MCF 10A (cell line): ENCODE measurements at regions of chr15 and their contacts with region 1.

Region 1: GRCh38 chr15:75201609-75202250 is at the start of gene C15orf39:
- DNase-seq: peak; percentile 67
- H3K4me3 Mint-ChIP-seq: peak within 1 kb of the TSS; percentile 91
- H3K27ac Mint-ChIP-seq: peak within 1 kb of the TSS; percentile 94
- H3K4me1 Mint-ChIP-seq: peaks cover 17% of the 10 kb centered on the region
- H3K27me3 Mint-ChIP-seq: no peaks in the 10 kb centered on the region
- CTCF ChIP-seq: peak; percentile 91
- total RNA-seq, gene C15orf39: 13.3 and 17.2 TPM in 2 replicates

Region 2: DNA sequence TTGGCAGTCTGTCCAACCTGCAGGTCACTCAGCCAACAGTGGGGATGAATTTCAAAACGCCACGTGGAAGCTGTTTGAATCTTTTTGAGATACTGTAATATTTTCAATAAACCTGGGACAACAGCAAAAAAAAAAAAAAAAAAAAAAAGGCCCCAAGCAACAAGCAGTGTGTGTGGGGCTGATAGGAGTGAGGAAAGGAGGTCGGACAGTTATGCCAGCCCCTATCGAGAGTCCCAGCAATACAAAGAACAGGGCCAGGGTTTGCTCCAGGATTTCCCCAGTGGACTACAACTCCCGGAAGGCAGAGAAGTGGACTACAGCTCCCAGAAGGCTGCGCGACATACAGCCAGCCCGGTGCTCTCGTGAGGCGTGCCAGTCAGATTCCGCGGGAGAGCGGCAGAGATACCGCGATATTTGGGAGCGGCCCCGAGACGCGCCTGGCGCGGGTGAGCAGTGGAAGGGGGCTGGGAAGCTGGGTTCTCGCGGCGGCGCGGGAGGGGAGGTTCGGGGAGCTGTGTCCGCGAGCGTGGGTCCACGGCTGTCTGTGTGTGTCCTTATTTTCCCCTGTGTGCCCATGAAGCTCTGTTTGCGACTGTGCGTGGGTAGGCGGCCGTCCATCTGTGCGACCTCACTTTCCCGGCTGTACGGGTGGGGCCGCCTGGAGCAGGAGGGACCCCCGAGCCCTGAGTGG is 178.4 kb before region 1 on chr15 and contains the start of gene PPCDC:
- CTCF ChIA-PET with region 1: interaction called, 85 read pairs
- POLR2A ChIA-PET with region 1: interaction called, 61 read pairs
- intact Hi-C with region 1: no loop called
- DNase-seq: peak; percentile 95
- H3K4me3 Mint-ChIP-seq: peak within 1 kb of the TSS; percentile 94
- H3K27ac Mint-ChIP-seq: peak within 1 kb of the TSS; percentile 95
- H3K4me1 Mint-ChIP-seq: no peaks in the 10 kb centered on the region
- H3K27me3 Mint-ChIP-seq: no peaks in the 10 kb centered on the region
- CTCF ChIP-seq: no peak
- total RNA-seq, gene PPCDC: 20.3 and 25.1 TPM in 2 replicates

Region 3: GRCh38 chr15:75034615-75035014 is 167.1 kb before region 1 on chr15:
- CTCF ChIA-PET with region 1: interaction called, 85 read pairs
- POLR2A ChIA-PET with region 1: interaction called, 61 read pairs
- intact Hi-C with region 1: loop called (anchors 1 kb)
- DNase-seq: no peak
- H3K4me3 Mint-ChIP-seq: no peak overlapping the region
- H3K27ac Mint-ChIP-seq: no peak overlapping the region
- H3K4me1 Mint-ChIP-seq: peaks cover 18% of the 10 kb centered on the region
- H3K27me3 Mint-ChIP-seq: no peaks in the 10 kb centered on the region
- CTCF ChIP-seq: no peak

Region 4: DNA sequence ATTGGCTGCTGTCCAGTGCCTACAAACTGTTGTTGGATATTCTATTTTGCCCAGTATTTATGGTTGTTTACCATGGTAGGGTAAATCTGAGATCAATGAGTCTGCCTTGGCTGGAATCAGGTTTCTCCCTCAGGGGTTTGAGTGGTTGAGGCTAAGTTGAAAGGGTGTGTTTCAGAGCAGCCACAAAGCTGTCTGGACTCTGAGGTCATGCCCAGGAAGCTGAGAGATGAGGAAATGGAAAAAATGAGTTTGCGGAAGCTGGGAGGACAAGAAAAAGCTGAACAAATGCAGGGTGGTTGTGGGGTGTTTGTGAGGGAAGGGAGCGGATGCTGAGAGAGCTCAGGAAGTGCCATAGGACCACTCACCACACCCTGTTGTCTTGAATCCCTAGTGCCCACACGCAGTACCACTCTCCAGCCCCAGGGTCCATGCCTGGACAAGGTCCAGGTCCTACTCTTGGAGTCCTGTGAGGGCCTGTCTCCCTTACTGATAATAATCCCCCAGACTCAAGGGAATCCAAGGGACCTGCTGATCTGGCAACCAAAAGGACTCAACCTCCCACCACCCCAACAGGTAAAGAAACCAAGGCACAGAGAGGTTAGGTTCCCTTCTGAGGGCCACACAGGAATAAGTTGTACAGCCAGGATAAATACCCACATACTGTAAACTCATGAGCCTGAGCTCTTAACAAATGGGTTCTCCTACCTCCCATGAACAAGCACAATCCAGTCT is 96.8 kb before region 1 on chr15:
- CTCF ChIA-PET with region 1: no interaction called
- POLR2A ChIA-PET with region 1: interaction called, 18 read pairs
- intact Hi-C with region 1: loop called (anchors 1 kb)
- DNase-seq: peak; percentile 86
- H3K4me3 Mint-ChIP-seq: no peak overlapping the region
- H3K27ac Mint-ChIP-seq: peak overlapping the region; percentile 61
- H3K4me1 Mint-ChIP-seq: peaks cover 35% of the 10 kb centered on the region
- H3K27me3 Mint-ChIP-seq: no peaks in the 10 kb centered on the region
- CTCF ChIP-seq: no peak

Region 5: GRCh38 chr15:75228787-75229186 is 27.1 kb after region 1 on chr15:
- CTCF ChIA-PET with region 1: no interaction called
- POLR2A ChIA-PET with region 1: no interaction called
- intact Hi-C with region 1: no loop called
- DNase-seq: no peak
- H3K4me3 Mint-ChIP-seq: no peak overlapping the region
- H3K27ac Mint-ChIP-seq: no peak overlapping the region
- H3K4me1 Mint-ChIP-seq: no peaks in the 10 kb centered on the region
- H3K27me3 Mint-ChIP-seq: peaks cover 58% of the 10 kb centered on the region
- CTCF ChIP-seq: no peak

Region 6: DNA sequence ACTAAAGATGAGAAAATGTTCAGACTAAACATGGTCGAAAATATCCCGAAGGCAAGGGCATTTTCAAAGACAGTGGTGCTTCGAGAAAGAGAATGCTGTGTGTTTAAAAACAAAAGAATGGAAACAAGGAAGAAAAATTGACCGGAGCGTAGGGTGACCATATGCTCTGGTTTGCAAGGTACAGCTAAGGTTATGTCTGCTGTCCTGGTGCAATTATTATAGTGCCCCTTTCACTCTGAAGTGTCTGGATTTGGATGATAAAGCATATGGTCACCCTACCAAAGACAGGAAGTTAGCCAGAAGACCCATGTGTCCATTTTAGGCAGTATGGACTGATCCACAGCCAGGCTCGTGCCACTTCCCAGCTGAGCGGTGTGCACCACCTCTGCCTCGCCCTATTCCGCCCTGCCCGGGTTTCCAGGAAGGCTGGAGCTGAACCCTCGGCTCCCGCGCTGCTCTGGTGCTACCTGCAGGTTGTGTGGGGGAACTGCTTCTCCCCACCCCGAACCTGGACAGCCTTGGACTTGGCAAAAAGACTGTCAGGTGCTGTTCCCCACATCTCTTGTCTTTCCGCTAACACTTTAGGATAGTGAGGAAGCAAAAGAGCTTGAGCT is 106.2 kb after region 1 on chr15:
- CTCF ChIA-PET with region 1: no interaction called
- POLR2A ChIA-PET with region 1: no interaction called
- intact Hi-C with region 1: loop called (anchors 10 kb)
- DNase-seq: peak; percentile 61
- H3K4me3 Mint-ChIP-seq: no peak overlapping the region
- H3K27ac Mint-ChIP-seq: no peak overlapping the region
- H3K4me1 Mint-ChIP-seq: peaks cover 15% of the 10 kb centered on the region
- H3K27me3 Mint-ChIP-seq: peaks cover 43% of the 10 kb centered on the region
- CTCF ChIP-seq: peak; percentile 57